IMR-90 (cell line): ENCODE measurements at regions of chr16 and their contacts with region 1.

Region 1: GRCh38 chr16:81723098-81723723 is 55.9 kb upstream of the PLCG2 start:
- DNase-seq: peak; percentile 80
- ATAC-seq: peak; percentile 85
- H3K4me3 ChIP-seq: no peak overlapping the region
- H3K27ac ChIP-seq: no peak overlapping the region
- H3K4me1 ChIP-seq: peaks cover 7% of the 10 kb centered on the region
- H3K27me3 ChIP-seq: peaks cover 36% of the 10 kb centered on the region
- CTCF ChIP-seq: peak; percentile 79
- POLR2A ChIP-seq: no peak
- RAD21 ChIP-seq: peak; percentile 92

Region 2: GRCh38 chr16:81204798-81205680 is 518.2 kb before region 1 on chr16:
- CTCF ChIA-PET with region 1: no interaction called
- POLR2A ChIA-PET with region 1: no interaction called
- dilution Hi-C with region 1: no loop called
- in situ Hi-C with region 1: loop called (anchors 10 kb)
- intact Hi-C with region 1: loop called (anchors 5 kb)
- DNase-seq: peak; percentile 64
- ATAC-seq: peak; percentile 90
- H3K4me3 ChIP-seq: no peak overlapping the region
- H3K27ac ChIP-seq: no peak overlapping the region
- H3K4me1 ChIP-seq: peaks cover 3% of the 10 kb centered on the region; the same call in 1 of the 2 replicates
- H3K27me3 ChIP-seq: peaks cover 24% of the 10 kb centered on the region
- CTCF ChIP-seq: peak; percentile 71
- POLR2A ChIP-seq: no peak
- RAD21 ChIP-seq: peak; percentile 64

Region 3: DNA sequence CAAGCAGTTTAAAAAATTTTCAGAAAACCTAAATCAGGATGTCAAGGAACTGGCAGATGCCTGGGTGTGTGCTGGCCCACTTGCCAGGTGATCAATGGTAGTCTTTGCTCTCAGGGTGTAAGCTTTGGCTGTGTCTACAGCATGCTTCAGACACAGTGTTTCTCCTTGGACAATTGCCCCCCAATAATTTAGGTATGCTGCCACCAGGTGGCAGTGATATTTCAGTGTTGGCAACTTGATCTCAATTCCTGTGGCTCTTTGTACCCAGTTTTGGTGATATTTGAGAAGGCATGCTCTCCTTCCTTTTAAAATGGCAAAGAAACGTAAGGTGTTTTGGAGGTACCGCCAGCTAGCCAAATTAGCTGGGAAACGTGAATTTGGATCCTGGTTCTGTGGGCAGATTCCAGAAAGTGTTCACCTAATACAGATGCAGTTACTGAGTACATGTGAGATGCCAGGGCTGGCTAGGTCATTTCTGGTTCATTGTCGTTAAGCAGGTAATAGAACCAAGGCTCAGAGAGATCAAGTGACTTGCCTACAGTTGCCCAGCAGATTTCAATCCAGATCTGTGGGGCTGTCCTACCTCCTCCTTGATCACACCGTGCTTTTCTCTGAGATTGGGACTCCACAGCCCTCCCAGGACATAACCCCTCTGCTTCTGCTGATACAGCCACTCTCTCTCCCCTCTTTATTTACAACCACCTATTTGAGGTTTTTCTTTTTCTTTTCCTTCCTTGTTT is 99.7 kb before region 1 on chr16:
- CTCF ChIA-PET with region 1: interaction called, 3 read pairs
- POLR2A ChIA-PET with region 1: no interaction called
- dilution Hi-C with region 1: no loop called
- in situ Hi-C with region 1: loop called (anchors 5 kb)
- intact Hi-C with region 1: loop called (anchors 1 kb)
- DNase-seq: peak; percentile 43
- ATAC-seq: peak; percentile 51
- H3K4me3 ChIP-seq: no peak overlapping the region
- H3K27ac ChIP-seq: no peak overlapping the region
- H3K4me1 ChIP-seq: peaks cover 6% of the 10 kb centered on the region
- H3K27me3 ChIP-seq: no peaks in the 10 kb centered on the region
- CTCF ChIP-seq: peak; percentile 71
- POLR2A ChIP-seq: no peak
- RAD21 ChIP-seq: peak; percentile 85

Region 4: DNA sequence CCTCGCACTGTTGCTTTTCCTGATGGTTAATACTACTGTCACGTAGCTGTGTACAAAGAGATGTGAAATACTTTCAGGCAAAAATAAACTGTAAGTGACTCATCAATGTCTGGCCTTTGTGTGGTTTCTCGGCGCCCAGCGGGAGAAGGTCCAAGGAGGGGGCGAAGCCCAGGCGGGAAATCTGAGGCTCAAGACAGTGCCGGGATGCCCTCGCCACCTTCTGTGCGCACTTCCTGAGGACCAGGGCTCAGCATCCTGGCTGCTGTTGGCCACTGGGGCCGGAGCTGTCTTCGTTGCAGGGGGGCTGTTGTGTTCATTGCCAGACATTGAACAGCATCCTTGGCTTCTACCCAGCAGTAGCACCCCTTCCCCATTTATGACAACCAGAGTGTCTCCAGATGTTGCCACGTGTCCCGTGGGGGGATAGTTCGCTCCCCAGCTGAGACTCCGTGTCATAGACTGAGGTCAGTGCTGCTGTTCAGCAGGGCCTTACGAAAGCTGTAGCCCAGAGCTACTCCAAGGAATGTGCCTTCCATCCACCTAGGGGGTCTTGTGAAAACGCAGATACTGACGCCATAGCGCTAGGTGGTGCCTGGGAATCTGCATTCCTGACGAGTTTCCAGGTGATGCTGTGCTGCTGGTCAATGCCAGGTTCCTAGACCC is 11.4 kb before region 1 on chr16:
- CTCF ChIA-PET with region 1: interaction called, 3 read pairs
- POLR2A ChIA-PET with region 1: no interaction called
- dilution Hi-C with region 1: no loop called
- in situ Hi-C with region 1: no loop called
- intact Hi-C with region 1: loop called (anchors 1 kb)
- DNase-seq: peak; percentile 92
- ATAC-seq: peak; percentile 78
- H3K4me3 ChIP-seq: no peak overlapping the region
- H3K27ac ChIP-seq: 0 out of 2 replicates have a peak overlapping the region, but pooled peaks have one; percentile 24
- H3K4me1 ChIP-seq: peaks cover 10% of the 10 kb centered on the region
- H3K27me3 ChIP-seq: peaks cover 29% of the 10 kb centered on the region
- CTCF ChIP-seq: no peak; the same call in 1 of the 2 replicates
- POLR2A ChIP-seq: no peak
- RAD21 ChIP-seq: 0 out of 2 replicates have a peak, but pooled peaks have one; percentile 17

Region 5: DNA sequence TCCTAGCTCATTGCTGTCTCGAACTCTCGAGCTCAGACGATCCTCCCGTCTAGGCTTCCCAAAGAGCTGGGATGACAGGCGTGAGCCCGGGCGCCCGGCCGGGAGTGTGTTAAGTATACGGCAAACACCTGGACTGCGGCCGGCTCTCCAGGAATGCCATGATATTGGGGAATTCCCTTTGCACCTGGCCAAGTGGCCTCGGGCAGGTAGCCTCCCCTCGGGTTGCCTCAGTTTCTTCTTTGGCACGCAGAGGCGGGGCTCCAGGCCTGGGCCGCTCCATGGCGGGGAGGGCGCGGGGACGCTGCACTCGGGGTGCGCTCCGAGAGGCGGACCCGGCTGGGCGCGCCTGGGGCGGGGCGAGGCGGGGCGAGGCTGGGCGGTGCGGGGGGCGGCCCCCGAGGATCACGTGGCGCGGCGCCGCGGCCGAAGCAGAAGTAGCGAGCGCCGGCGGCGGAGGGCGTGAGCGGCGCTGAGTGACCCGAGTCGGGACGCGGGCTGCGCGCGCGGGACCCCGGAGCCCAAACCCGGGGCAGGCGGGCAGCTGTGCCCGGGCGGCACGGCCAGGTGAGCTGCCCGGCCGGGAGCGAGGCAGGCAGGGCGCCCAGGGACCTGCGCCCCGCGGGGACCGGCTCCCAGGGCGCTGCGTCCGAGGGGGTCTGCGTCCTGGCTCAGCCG is 55.8 kb after region 1 on chr16 and contains the start of gene PLCG2:
- CTCF ChIA-PET with region 1: no interaction called
- POLR2A ChIA-PET with region 1: no interaction called
- dilution Hi-C with region 1: no loop called
- in situ Hi-C with region 1: no loop called
- intact Hi-C with region 1: no loop called
- DNase-seq: no peak
- ATAC-seq: peak; percentile 91
- H3K4me3 ChIP-seq: peak within 1 kb of the TSS; percentile 11; the same call in 1 of the 2 replicates
- H3K27ac ChIP-seq: no peak within 1 kb of the TSS
- H3K4me1 ChIP-seq: no peaks in the 10 kb centered on the region
- H3K27me3 ChIP-seq: peaks cover 45% of the 10 kb centered on the region
- CTCF ChIP-seq: no peak
- POLR2A ChIP-seq: no peak
- RAD21 ChIP-seq: no peak
- total RNA-seq, gene PLCG2: 0.18 and 0.28 TPM in 2 replicates